Posterior cingulate gyrus (tissue), 11 donors: ENCODE measurements at regions of chr1 and their contacts with region 1.

Region 1: GRCh38 chr1:75785983-75786853 is at the start of gene RABGGTB:
- DNase-seq: peak; percentile 90 to 99 (median 94)

Region 2: GRCh38 chr1:75724472-75725022 is 61.7 kb before region 1 on chr1 and contains the start of gene ACADM:
- intact Hi-C with region 1: loop called (anchors 1 kb)
- DNase-seq: peak; percentile 82 to 98 (median 86)